Gastrocnemius medialis (tissue), 4 donors: ENCODE measurements at regions of chr15 and their contacts with region 1.

Region 1: GRCh38 chr15:61879219-61879618 is 181.0 kb downstream of the VPS13C start:
- DNase-seq: no peak
- ATAC-seq: no peak
- H3K4me3 ChIP-seq: no peak overlapping the region
- H3K27ac ChIP-seq: no peak overlapping the region
- H3K4me1 ChIP-seq: no peaks in the 10 kb centered on the region
- H3K27me3 ChIP-seq: no peaks in the 10 kb centered on the region
- CTCF ChIP-seq: no peak
- POLR2A ChIP-seq: no peak

Region 2: DNA sequence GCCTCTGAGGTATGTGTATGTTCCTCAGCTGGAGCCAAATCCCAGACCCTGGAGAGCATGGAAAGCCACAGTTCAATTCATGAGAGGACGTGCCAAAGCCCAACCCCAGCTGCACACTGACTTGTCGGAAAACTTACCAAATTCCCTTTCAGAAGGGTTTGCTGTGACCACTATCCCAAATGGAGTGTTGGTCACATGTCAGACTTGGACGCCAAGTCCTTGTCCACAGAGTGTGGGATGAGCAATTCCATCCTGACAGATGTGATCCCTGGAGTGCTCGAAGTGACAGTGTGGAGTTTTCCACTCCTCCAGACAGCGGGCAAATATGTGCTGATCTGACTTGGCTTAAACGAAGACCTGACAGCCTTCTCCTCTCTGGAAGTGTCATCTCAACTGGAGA is 721.3 kb before region 1 on chr15:
- in situ Hi-C with region 1: no loop called
- intact Hi-C with region 1: no loop called
- DNase-seq: peak; percentile 82 to 83
- ATAC-seq: peak; percentile 84 to 88
- H3K4me3 ChIP-seq: peak overlapping the region; percentile 18 to 36 (median 28)
- H3K27ac ChIP-seq: peak overlapping the region; percentile 67 to 80 (median 71)
- H3K4me1 ChIP-seq: peaks cover 41 to 50% of the 10 kb centered on the region in 2 donors
- H3K27me3 ChIP-seq: no peaks in the 10 kb centered on the region
- CTCF ChIP-seq: no peak
- POLR2A ChIP-seq: no peak

Region 3: GRCh38 chr15:61994216-61994615 is 115.0 kb after region 1 on chr15:
- in situ Hi-C with region 1: no loop called
- intact Hi-C with region 1: no loop called
- DNase-seq: no peak
- ATAC-seq: no peak
- H3K4me3 ChIP-seq: no peak overlapping the region
- H3K27ac ChIP-seq: no peak overlapping the region
- H3K4me1 ChIP-seq: no peaks in the 10 kb centered on the region
- H3K27me3 ChIP-seq: no peaks in the 10 kb centered on the region
- CTCF ChIP-seq: no peak
- POLR2A ChIP-seq: no peak

Region 4: GRCh38 chr15:62277816-62278394 is 398.7 kb after region 1 on chr15:
- in situ Hi-C with region 1: loop called in 1 of 4 experiments (anchors 25 kb)
- intact Hi-C with region 1: no loop called
- DNase-seq: no peak
- ATAC-seq: no peak
- H3K4me3 ChIP-seq: no peak overlapping the region
- H3K27ac ChIP-seq: no peak overlapping the region
- H3K4me1 ChIP-seq: no peaks in the 10 kb centered on the region
- H3K27me3 ChIP-seq: no peaks in the 10 kb centered on the region
- CTCF ChIP-seq: no peak
- POLR2A ChIP-seq: no peak